CD8-positive, alpha-beta T cell (primary cell): ENCODE measurements at regions of chr1 and their contacts with region 1.

Region 1: DNA sequence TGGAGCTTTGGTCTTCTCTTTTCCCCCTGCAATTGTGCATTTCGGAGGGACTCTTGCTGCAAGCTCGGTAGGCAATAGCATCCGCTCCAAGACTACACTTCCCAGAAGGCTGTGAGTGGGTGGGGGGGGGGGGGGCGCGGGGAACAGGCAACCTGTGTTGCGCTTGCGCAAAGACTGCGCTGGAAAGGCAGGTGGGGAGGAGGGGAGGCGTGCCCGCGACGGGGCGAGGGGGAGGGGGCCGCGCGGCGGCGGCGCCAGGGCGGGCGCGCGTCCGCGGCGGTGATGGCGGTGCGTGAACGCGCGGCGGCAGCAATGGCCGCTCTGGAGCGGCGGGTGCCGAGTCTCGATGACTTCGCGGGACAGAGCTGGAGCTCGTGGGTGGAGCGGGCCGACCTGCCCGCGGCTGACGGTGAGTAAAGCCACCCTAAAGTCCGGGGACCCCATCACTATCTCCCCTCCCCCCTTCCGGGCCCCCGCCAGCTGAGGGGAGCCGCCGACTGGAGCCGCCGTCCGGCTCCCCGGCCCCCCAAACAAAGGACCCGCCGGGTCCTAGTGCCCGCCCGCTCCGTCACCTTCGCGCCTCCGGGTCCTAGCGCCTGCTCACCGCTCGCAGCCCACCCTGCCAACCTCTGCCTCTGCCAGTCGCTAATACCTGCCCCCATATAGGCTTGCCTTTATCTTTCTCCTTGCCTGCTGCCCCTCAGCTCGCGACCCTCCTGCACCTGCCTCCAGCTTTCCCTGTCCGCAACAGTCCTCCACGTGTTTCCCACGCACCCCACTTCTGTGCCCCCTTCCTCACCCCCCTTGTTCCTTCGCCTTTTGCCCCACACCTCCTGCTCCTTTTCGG is at the start of gene ATXN7L2:
- DNase-seq: peak; percentile 87 to 97 (median 92)
- ATAC-seq: peak; percentile 81
- H3K4me3 ChIP-seq: peak within 1 kb of the TSS; percentile 78 to 90
- H3K4me3 Mint-ChIP-seq: peak within 1 kb of the TSS; percentile 94
- H3K27ac ChIP-seq: peak within 1 kb of the TSS; percentile 78 to 93
- H3K27ac Mint-ChIP-seq: peak within 1 kb of the TSS; percentile 91
- H3K4me1 ChIP-seq: peaks cover 22% of the 10 kb centered on the region
- H3K4me1 Mint-ChIP-seq: peaks cover 35% of the 10 kb centered on the region
- H3K27me3 ChIP-seq: no peaks in the 10 kb centered on the region
- H3K27me3 Mint-ChIP-seq: peaks cover 2% of the 10 kb centered on the region
- CTCF ChIP-seq: no peak
- total RNA-seq, gene ATXN7L2: 16.8 to 19.4 TPM

Region 2: DNA sequence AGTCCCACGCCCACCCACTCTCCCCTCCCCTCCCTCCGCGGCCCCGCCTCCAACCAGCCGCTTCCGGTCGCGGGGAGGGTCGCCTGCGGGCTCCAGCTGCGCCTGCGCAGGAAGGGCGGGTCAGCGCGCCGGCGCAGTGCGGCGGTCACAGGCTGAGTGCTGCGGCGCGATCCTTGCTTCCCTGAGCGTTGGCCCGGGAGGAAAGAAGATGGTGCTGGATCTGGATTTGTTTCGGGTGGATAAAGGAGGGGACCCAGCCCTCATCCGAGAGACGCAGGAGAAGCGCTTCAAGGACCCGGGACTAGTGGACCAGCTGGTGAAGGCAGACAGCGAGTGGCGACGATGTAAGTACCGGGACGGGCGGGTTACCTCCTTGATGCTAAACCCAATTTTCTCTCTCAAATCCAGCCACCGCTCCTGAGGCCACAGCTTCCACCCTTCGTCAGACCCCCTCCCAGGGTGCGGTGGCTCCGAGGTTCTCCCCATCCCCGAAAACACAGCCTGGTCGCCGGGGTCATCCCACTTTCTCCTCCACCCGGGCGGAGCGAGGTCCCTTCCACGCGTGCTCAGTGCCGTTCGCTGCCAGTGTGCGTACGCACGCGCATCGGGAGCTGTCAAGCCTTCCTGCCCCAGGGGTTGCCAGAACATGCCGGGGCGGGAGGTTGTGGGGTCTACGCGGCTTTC is 270.0 kb before region 1 on chr1 and contains the start of gene SARS1:
- CTCF ChIA-PET with region 1: no interaction called
- POLR2A ChIA-PET with region 1: interaction called, 4 read pairs
- intact Hi-C with region 1: loop called in 1 of 2 experiments (anchors 1 kb)
- DNase-seq: peak; percentile 67 to 94 (median 85)
- ATAC-seq: peak; percentile 86
- H3K4me3 ChIP-seq: peak within 1 kb of the TSS; percentile 96 to 100
- H3K4me3 Mint-ChIP-seq: peak within 1 kb of the TSS; percentile 100
- H3K27ac ChIP-seq: peak within 1 kb of the TSS; percentile 79
- H3K27ac Mint-ChIP-seq: peak within 1 kb of the TSS; percentile 95
- H3K4me1 ChIP-seq: peaks cover 27% of the 10 kb centered on the region
- H3K4me1 Mint-ChIP-seq: peaks cover 44% of the 10 kb centered on the region
- H3K27me3 ChIP-seq: no peaks in the 10 kb centered on the region
- H3K27me3 Mint-ChIP-seq: peaks cover 2% of the 10 kb centered on the region
- CTCF ChIP-seq: no peak
- total RNA-seq, gene SARS1: 113 to 118 TPM

Region 3: GRCh38 chr1:109282952-109283747 is 200.7 kb before region 1 on chr1 and contains the start of gene PSRC1:
- CTCF ChIA-PET with region 1: interaction called, 3 read pairs
- POLR2A ChIA-PET with region 1: no interaction called
- intact Hi-C with region 1: loop called (anchors 2 to 5 kb)
- DNase-seq: peak; percentile 73 to 94 (median 87)
- ATAC-seq: peak; percentile 94
- H3K4me3 ChIP-seq: peak within 1 kb of the TSS; percentile 72 to 82
- H3K4me3 Mint-ChIP-seq: peak within 1 kb of the TSS; percentile 93
- H3K27ac ChIP-seq: peak within 1 kb of the TSS; percentile 46 to 79
- H3K27ac Mint-ChIP-seq: peak within 1 kb of the TSS; percentile 88
- H3K4me1 ChIP-seq: peaks cover 12% of the 10 kb centered on the region
- H3K4me1 Mint-ChIP-seq: peaks cover 16% of the 10 kb centered on the region
- H3K27me3 ChIP-seq: no peaks in the 10 kb centered on the region
- H3K27me3 Mint-ChIP-seq: no peaks in the 10 kb centered on the region
- CTCF ChIP-seq: peak; percentile 40
- total RNA-seq, gene PSRC1: not detected

Region 4: GRCh38 chr1:109438798-109439297 is 45.0 kb before region 1 on chr1:
- CTCF ChIA-PET with region 1: no interaction called
- POLR2A ChIA-PET with region 1: no interaction called
- intact Hi-C with region 1: no loop called
- DNase-seq: no peak
- ATAC-seq: no peak
- H3K4me3 ChIP-seq: no peak overlapping the region
- H3K4me3 Mint-ChIP-seq: no peak overlapping the region
- H3K27ac ChIP-seq: no peak overlapping the region
- H3K27ac Mint-ChIP-seq: no peak overlapping the region
- H3K4me1 ChIP-seq: no peaks in the 10 kb centered on the region
- H3K4me1 Mint-ChIP-seq: no peaks in the 10 kb centered on the region
- H3K27me3 ChIP-seq: peaks cover 0 to 2% of the 10 kb centered on the region in 2 experiments
- H3K27me3 Mint-ChIP-seq: peaks cover 14% of the 10 kb centered on the region
- CTCF ChIP-seq: no peak

Region 5: GRCh38 chr1:109499661-109500536 is 16.0 kb after region 1 on chr1:
- CTCF ChIA-PET with region 1: interaction called, 681 read pairs
- POLR2A ChIA-PET with region 1: interaction called, 23 read pairs
- intact Hi-C with region 1: no loop called
- DNase-seq: peak; percentile 34 to 81 (median 74)
- ATAC-seq: peak; percentile 16
- H3K4me3 ChIP-seq: no peak overlapping the region
- H3K4me3 Mint-ChIP-seq: peak overlapping the region; percentile 63
- H3K27ac ChIP-seq: peak overlapping the region; percentile 85 to 94
- H3K27ac Mint-ChIP-seq: peak overlapping the region; percentile 97
- H3K4me1 ChIP-seq: peaks cover 94% of the 10 kb centered on the region
- H3K4me1 Mint-ChIP-seq: peaks cover 89% of the 10 kb centered on the region
- H3K27me3 ChIP-seq: no peaks in the 10 kb centered on the region
- H3K27me3 Mint-ChIP-seq: no peaks in the 10 kb centered on the region
- CTCF ChIP-seq: peak; percentile 59

Region 6: GRCh38 chr1:109739738-109740660 is 256.1 kb after region 1 on chr1:
- CTCF ChIA-PET with region 1: no interaction called
- POLR2A ChIA-PET with region 1: no interaction called
- intact Hi-C with region 1: loop called in 1 of 2 experiments (anchors 5 kb)
- DNase-seq: peak; percentile 59 to 91 (median 82)
- ATAC-seq: peak; percentile 97
- H3K4me3 ChIP-seq: peak overlapping the region; percentile 76 to 82
- H3K4me3 Mint-ChIP-seq: peak overlapping the region; percentile 92
- H3K27ac ChIP-seq: peak overlapping the region; percentile 49 to 58
- H3K27ac Mint-ChIP-seq: peak overlapping the region; percentile 89
- H3K4me1 ChIP-seq: peaks cover 13% of the 10 kb centered on the region
- H3K4me1 Mint-ChIP-seq: peaks cover 15% of the 10 kb centered on the region
- H3K27me3 ChIP-seq: peaks cover 0 to 2% of the 10 kb centered on the region in 2 experiments
- H3K27me3 Mint-ChIP-seq: peaks cover 3% of the 10 kb centered on the region
- CTCF ChIP-seq: no peak